K562 (cell line): ENCODE measurements at regions of chr18 and their contacts with region 1.

Region 1: DNA sequence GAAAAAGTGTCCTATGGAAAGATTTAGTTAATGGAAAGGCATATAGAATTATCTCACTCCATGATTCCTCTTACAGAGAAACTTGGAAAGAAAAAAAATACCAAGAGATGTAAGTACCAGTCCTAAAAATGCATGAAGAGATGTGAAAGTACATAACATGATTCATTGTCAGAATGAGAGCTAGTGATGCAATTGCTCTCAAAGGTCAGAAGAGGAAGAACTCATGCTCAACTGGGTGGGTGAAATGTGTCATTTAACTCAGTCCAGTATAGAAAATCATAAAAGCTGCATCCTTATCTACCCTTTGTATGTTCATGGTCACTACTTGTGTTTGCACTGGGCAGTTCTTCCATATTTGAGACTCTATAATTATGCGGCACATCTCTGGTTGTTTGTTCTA is 300.0 kb upstream of the PIK3C3 start:
- DNase-seq: no peak
- ATAC-seq: no peak
- H3K4me3 ChIP-seq: no peak overlapping the region
- H3K27ac ChIP-seq: no peak overlapping the region
- H3K4me1 ChIP-seq: no peaks in the 10 kb centered on the region
- H3K27me3 ChIP-seq: no peaks in the 10 kb centered on the region
- CTCF ChIP-seq: no peak
- EP300 ChIP-seq: no peak
- POLR2A ChIP-seq: no peak
- RAD21 ChIP-seq: no peak

Region 2: GRCh38 chr18:41532344-41533086 is 122.6 kb before region 1 on chr18:
- CTCF ChIA-PET with region 1: no interaction called
- POLR2A ChIA-PET with region 1: no interaction called
- in situ Hi-C with region 1: no loop called
- intact Hi-C with region 1: no loop called
- DNase-seq: no peak
- ATAC-seq: no peak
- H3K4me3 ChIP-seq: no peak overlapping the region
- H3K27ac ChIP-seq: no peak overlapping the region
- H3K4me1 ChIP-seq: no peaks in the 10 kb centered on the region
- H3K27me3 ChIP-seq: no peaks in the 10 kb centered on the region
- CTCF ChIP-seq: no peak
- EP300 ChIP-seq: no peak
- POLR2A ChIP-seq: no peak
- RAD21 ChIP-seq: no peak

Region 3: GRCh38 chr18:41624460-41624859 is 30.6 kb before region 1 on chr18:
- CTCF ChIA-PET with region 1: no interaction called
- POLR2A ChIA-PET with region 1: no interaction called
- in situ Hi-C with region 1: no loop called
- intact Hi-C with region 1: no loop called
- DNase-seq: no peak
- ATAC-seq: no peak
- H3K4me3 ChIP-seq: no peak overlapping the region
- H3K27ac ChIP-seq: no peak overlapping the region
- H3K4me1 ChIP-seq: no peaks in the 10 kb centered on the region
- H3K27me3 ChIP-seq: no peaks in the 10 kb centered on the region
- CTCF ChIP-seq: no peak
- EP300 ChIP-seq: no peak
- POLR2A ChIP-seq: no peak
- RAD21 ChIP-seq: no peak

Region 4: DNA sequence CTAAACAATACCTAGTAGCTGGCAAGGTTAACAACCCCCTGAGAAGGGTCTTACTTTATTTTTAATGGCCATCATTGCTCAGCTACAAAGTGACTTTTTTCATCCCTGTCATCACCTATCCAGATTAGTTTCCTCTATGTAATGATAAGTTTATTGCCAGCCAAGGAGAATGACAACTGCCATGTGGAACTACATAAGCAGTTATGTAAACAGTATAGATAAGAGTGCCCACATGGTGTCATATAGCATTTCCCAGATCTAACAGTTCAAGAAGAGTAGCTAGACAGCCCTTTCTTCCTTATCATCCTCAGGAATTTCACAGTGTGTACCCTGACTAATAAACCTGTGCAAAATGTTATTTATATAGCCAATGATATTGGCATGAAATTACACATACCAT is 59.8 kb after region 1 on chr18:
- CTCF ChIA-PET with region 1: no interaction called
- POLR2A ChIA-PET with region 1: no interaction called
- in situ Hi-C with region 1: no loop called
- intact Hi-C with region 1: loop called (anchors 10 kb)
- DNase-seq: no peak
- ATAC-seq: no peak
- H3K4me3 ChIP-seq: no peak overlapping the region
- H3K27ac ChIP-seq: no peak overlapping the region
- H3K4me1 ChIP-seq: no peaks in the 10 kb centered on the region
- H3K27me3 ChIP-seq: no peaks in the 10 kb centered on the region
- CTCF ChIP-seq: no peak
- EP300 ChIP-seq: no peak
- POLR2A ChIP-seq: no peak
- RAD21 ChIP-seq: no peak